Tibial artery (tissue), 4 donors: ENCODE measurements at regions of chr1 and their contacts with region 1.

Region 1: DNA sequence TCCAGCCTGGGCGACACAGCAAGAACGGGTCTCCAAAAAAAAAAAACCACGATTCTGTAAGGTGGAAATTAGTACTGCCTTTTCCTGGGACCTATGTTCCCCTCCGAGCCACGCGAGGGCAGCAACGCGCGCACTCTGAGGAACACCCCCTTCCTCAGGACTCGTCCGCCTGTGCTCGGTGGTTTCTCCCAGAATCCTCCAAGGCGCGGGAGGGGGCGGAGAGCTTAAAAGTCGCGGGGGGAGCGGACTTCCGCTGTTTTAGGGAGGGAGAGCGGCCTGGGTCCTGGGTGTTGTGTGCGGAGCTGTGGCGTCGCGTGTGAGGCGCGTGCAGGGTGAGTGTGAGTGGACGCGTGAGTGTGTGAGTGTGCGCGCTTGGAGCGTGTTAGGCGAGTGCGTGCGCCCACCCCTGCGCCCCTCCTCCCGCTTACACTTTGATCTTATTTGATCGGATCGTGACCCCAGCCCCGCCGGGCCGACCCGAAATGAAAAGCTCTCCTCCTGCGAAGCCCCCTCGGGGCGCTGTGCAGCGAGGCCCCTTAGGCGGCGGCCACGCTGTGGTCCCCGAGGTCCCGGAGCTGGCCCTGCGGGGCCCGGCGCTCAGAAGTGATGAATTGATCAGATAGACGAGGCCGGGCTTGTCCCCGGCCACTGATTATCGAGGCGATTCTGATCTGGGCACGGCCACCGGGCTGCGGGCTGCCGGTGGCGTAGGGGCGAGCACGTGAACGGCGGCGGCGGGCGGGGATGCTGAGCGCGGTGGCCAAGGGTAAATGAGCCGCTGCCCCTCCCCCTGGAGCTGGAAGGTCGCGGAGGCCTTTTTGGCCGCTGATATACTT is 9.6 kb downstream of the TMEM167B start:
- DNase-seq: peak; percentile 97 to 98
- H3K4me3 ChIP-seq: peak overlapping the region; percentile 98 to 99
- H3K27ac ChIP-seq: peak overlapping the region; percentile 97 to 99
- H3K4me1 ChIP-seq: peaks cover 0 to 20% (median 7%) of the 10 kb centered on the region in 4 donors
- H3K27me3 ChIP-seq: no peaks in the 10 kb centered on the region
- CTCF ChIP-seq: peak; percentile 83 to 90

Region 2: GRCh38 chr1:108963052-108963686 is 137.0 kb before region 1 on chr1 and contains the start of gene CLCC1:
- intact Hi-C with region 1: loop called (anchors 10 kb)
- DNase-seq: peak; percentile 93 to 95
- H3K4me3 ChIP-seq: peak within 1 kb of the TSS; percentile 75 to 79
- H3K27ac ChIP-seq: peak within 1 kb of the TSS; percentile 92 to 94
- H3K4me1 ChIP-seq: peaks cover 0 to 38% (median 14%) of the 10 kb centered on the region in 4 donors
- H3K27me3 ChIP-seq: no peaks in the 10 kb centered on the region
- CTCF ChIP-seq: no peak

Region 3: DNA sequence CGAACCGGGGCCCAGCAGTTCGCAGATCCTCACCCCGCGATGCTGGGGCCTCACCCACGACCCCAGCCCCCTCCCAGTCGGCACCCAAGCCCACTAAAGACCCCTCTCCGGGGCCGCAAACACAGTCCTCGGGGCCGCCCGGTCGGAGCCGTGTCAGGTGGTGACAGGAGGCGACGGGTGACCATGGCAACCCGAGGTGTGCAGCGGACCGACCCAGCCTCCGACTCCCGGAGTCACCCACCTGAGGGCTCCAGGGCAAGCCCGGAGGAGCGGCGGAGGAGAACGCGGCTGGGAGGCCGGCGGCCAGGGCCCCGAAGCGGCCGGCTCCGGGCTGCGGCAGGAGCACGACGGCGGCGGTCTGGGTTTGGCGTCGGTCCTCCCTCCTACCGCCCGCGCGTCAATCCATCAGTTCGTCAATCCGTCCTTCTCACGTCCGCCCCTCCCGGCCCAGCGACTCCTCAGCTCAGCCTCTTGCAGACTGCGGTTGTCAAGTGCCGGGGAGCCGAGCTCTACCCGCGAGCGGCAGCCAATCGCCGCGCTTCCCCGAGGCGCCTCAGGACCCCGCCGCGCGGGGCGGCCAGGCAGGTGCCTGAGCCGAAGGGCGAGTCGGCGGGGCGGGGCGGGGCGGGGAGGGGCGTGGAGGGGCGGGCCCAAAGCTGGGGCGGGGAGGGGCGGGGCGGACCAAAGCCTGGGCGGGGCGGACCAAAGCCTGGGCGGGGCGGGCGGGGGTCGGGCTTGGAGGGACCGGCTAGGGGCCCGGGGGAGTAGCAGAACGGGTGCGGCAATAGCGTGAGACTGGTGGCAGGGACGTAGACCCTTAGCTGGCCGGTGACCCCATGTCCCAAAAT is 58.3 kb before region 1 on chr1 and contains the start of gene WDR47:
- intact Hi-C with region 1: loop called (anchors 1 kb)
- DNase-seq: peak; percentile 95 to 98
- H3K4me3 ChIP-seq: peak within 1 kb of the TSS; percentile 80 to 96
- H3K27ac ChIP-seq: peak within 1 kb of the TSS; percentile 85 to 92
- H3K4me1 ChIP-seq: peaks cover 0 to 14% (median 9%) of the 10 kb centered on the region in 4 donors
- H3K27me3 ChIP-seq: no peaks in the 10 kb centered on the region
- CTCF ChIP-seq: no peak

Region 4: GRCh38 chr1:109213785-109214468 is 113.8 kb after region 1 on chr1 and contains the start of gene SARS1:
- intact Hi-C with region 1: loop called (anchors 5 kb)
- DNase-seq: peak; percentile 82 to 93
- H3K4me3 ChIP-seq: peak within 1 kb of the TSS; percentile 79 to 81
- H3K27ac ChIP-seq: peak within 1 kb of the TSS; percentile 91 to 92
- H3K4me1 ChIP-seq: peaks cover 0 to 42% (median 19%) of the 10 kb centered on the region in 4 donors
- H3K27me3 ChIP-seq: no peaks in the 10 kb centered on the region
- CTCF ChIP-seq: no peak